Ovary (tissue), 10 donors: ENCODE measurements at regions of chr12 and their contacts with region 1.

Region 1: DNA sequence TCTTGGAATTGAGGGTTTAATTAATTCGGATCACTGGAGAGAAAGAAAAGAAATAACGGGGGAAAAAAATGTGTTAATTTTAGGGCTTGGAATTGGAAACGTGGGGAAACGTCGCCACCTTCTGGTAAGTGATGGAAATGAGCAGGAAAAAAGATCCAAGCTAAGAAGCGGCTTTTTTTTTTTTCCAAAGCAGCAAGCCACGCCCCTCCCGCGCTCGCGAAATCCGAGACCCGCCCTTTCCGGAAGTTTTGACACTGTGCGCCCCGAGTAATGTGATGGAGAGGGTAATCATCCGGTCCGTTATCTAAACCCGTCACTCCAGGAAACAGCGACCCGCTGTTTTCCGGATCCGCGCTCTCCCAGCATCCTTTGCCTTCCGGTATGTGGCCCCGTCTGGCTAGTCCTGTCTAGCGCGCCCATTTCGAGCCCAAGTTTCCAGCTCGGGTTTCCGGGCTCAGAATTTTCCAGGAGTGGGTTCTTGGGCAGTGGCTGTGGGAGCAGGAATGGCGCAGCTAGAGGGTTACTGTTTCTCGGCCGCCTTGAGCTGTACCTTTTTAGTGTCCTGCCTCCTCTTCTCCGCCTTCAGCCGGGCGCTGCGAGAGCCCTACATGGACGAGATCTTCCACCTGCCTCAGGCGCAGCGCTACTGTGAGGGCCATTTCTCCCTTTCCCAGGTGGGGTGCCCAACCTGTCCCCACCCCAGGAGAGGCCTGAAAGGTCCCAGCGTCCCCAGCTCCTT is at the start of gene ALG10B:
- DNase-seq: peak; percentile 90 to 93 (median 92)
- H3K4me3 ChIP-seq: peak within 1 kb of the TSS; percentile 67
- H3K27ac ChIP-seq: peak within 1 kb of the TSS in 1 of 2 donors; percentile 78
- H3K4me1 ChIP-seq: no peaks in the 10 kb centered on the region
- H3K27me3 ChIP-seq: no peaks in the 10 kb centered on the region
- CTCF ChIP-seq: peak; percentile 45 to 76 (median 50)
- EP300 ChIP-seq: no peak
- POLR2A ChIP-seq: peak; percentile 12
- total RNA-seq, gene ALG10B: 4.3 to 11.8 (median 7.4) TPM

Region 2: GRCh38 chr12:38138225-38139221 is 178.0 kb before region 1 on chr12:
- intact Hi-C with region 1: loop called in 3 of 4 experiments (anchors 5 to 10 kb)
- DNase-seq: peak in 4 of 5 donors; percentile 51 to 79 (median 63)
- H3K4me3 ChIP-seq: peak overlapping the region; percentile 19
- H3K27ac ChIP-seq: no peak overlapping the region
- H3K4me1 ChIP-seq: peaks cover 3% of the 10 kb centered on the region
- H3K27me3 ChIP-seq: no peaks in the 10 kb centered on the region
- CTCF ChIP-seq: peak; percentile 81 to 94 (median 88)
- EP300 ChIP-seq: no peak
- POLR2A ChIP-seq: no peak

Region 3: DNA sequence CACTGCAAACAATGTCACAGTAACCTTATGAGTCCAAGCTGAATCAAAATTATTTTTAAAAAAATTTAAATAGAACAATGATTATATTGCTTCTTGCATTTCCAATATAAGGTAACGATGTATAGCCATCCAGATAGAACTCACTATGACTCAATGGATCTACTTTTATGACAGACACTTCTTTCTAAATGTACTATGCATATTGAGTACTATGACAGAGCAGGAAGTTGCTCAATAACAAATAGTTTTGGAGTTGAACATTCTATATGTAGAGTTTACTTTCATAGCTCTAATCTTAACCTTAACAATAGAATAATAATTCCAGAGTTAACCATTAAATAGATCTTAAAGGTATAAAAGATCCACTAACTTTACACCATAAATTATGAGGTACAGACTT is 46.7 kb before region 1 on chr12:
- intact Hi-C with region 1: no loop called
- DNase-seq: no peak
- H3K4me3 ChIP-seq: no peak overlapping the region
- H3K27ac ChIP-seq: no peak overlapping the region
- H3K4me1 ChIP-seq: no peaks in the 10 kb centered on the region
- H3K27me3 ChIP-seq: no peaks in the 10 kb centered on the region
- CTCF ChIP-seq: no peak
- EP300 ChIP-seq: no peak
- POLR2A ChIP-seq: no peak